Caco-2 (cell line): ENCODE measurements at regions of chr11 and their contacts with region 1.

Region 1: DNA sequence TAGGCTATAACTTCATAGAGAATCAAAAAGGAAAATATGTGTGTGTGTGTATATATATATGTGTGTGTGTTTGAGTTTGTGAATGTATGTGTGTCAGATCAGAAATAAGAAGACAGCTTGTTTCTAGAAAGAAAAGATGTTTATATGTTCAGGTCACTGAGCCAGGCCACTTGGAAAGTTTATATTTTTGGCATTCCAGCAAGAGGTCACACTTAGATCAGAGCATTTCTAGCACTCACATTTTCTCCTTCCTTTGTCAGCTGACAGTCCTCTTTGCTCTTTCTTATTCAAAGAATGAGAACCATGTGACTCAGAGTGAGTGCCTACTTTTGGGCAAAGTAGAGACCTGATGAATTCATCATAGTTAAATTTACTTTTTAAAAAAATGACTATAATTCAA is 22.9 kb downstream of the RAB38 start:
- DNase-seq: no peak
- H3K4me3 ChIP-seq: no peak overlapping the region
- H3K4me3 Mint-ChIP-seq: no peak overlapping the region
- H3K27ac Mint-ChIP-seq: no peak overlapping the region
- H3K4me1 ChIP-seq: no peaks in the 10 kb centered on the region
- H3K4me1 Mint-ChIP-seq: no peaks in the 10 kb centered on the region
- H3K27me3 ChIP-seq: no peaks in the 10 kb centered on the region; the same call in 1 of the 2 replicates
- H3K27me3 Mint-ChIP-seq: peaks cover 3% of the 10 kb centered on the region
- CTCF ChIP-seq: no peak

Region 2: GRCh38 chr11:88484873-88485621 is 332.7 kb after region 1 on chr11:
- CTCF ChIA-PET with region 1: no interaction called
- POLR2A ChIA-PET with region 1: no interaction called
- intact Hi-C with region 1: loop called (anchors 1 kb)
- DNase-seq: peak; percentile 60 to 70
- H3K4me3 ChIP-seq: no peak overlapping the region
- H3K4me3 Mint-ChIP-seq: no peak overlapping the region
- H3K27ac Mint-ChIP-seq: no peak overlapping the region
- H3K4me1 ChIP-seq: no peaks in the 10 kb centered on the region
- H3K4me1 Mint-ChIP-seq: no peaks in the 10 kb centered on the region
- H3K27me3 ChIP-seq: no peaks in the 10 kb centered on the region
- H3K27me3 Mint-ChIP-seq: peaks cover 15% of the 10 kb centered on the region
- CTCF ChIP-seq: peak; percentile 79